A549 (cell line): ENCODE measurements at regions of chr17 and their contacts with region 1.

Region 1: GRCh38 chr17:17568749-17569195 is 22.7 kb downstream of the PEMT start:
- DNase-seq: peak; percentile 64 to 95
- ATAC-seq: peak; percentile 58 to 86; a peak in 5 of 6 replicates
- H3K4me3 ChIP-seq: no peak overlapping the region
- H3K27ac ChIP-seq: no peak overlapping the region
- H3K4me1 ChIP-seq: no peaks in the 10 kb centered on the region
- CTCF ChIP-seq: peak; percentile 84
- EP300 ChIP-seq: no peak
- POLR2A ChIP-seq: no peak
- RAD21 ChIP-seq: peak; percentile 80 to 81

Region 2: GRCh38 chr17:17445925-17446665 is 122.7 kb before region 1 on chr17:
- CTCF ChIA-PET with region 1: interaction called, 26 read pairs
- POLR2A ChIA-PET with region 1: no interaction called
- DNase-seq: peak; percentile 98
- ATAC-seq: peak; percentile 86 to 88
- H3K4me3 ChIP-seq: peak overlapping the region; percentile 14; the same call in 1 of the 3 replicates
- H3K27ac ChIP-seq: peak overlapping the region; percentile 71 to 83
- H3K4me1 ChIP-seq: peaks cover 48% of the 10 kb centered on the region
- CTCF ChIP-seq: no peak
- EP300 ChIP-seq: peak; percentile 90 to 97; a peak in 4 of 5 replicates
- POLR2A ChIP-seq: no peak
- RAD21 ChIP-seq: peak; percentile 5 to 49; a peak in 3 of 5 replicates

Region 3: GRCh38 chr17:17511881-17512858 is 56.6 kb before region 1 on chr17:
- CTCF ChIA-PET with region 1: interaction called, 50 read pairs
- POLR2A ChIA-PET with region 1: no interaction called
- DNase-seq: peak; percentile 39 to 54
- ATAC-seq: peak; percentile 31 to 62; a peak in 3 of 6 replicates
- H3K4me3 ChIP-seq: no peak overlapping the region
- H3K27ac ChIP-seq: peak overlapping the region in 1 of 2 experiments; percentile 45; a peak in 3 of 6 replicates
- H3K4me1 ChIP-seq: peaks cover 15% of the 10 kb centered on the region
- CTCF ChIP-seq: no peak
- EP300 ChIP-seq: no peak
- POLR2A ChIP-seq: no peak
- RAD21 ChIP-seq: no peak

Region 4: DNA sequence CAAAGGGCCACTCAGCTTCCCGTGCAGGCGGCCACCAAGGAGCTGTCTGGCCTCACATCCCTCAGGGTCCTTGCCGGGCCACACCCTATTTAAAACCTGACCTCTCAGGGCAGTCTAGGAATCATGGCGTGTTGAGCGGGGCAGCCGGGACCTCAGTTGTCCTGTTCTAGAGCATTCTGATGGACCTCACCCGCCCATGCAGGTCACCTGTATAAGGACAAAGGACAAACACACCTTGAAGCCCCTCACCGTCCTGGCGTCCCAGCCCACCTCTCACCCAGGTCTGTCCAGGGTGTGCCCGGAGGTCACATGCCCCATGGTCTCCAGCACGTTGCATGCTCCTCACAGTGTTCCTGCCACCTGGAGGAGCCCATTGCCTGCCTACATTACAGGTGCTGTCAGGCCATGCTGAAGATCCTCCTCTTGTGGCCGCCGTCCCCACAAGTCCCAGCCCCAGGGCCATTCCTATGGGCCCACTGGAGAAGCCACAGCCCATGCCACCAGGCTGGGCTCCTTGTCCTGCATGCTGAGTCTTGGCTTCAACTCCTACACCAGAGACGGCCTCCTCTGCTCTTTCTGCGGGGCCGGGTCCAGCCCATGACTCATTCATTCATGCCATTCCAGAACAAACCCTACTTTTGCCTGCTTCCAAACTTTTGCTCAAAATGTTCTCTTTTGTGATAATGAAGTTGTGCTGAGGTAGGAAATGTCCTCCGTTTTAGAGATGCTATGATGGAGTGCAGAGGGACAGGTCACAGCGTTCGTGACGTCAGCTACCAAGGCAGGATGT is 23.5 kb before region 1 on chr17:
- CTCF ChIA-PET with region 1: interaction called, 81 read pairs
- POLR2A ChIA-PET with region 1: no interaction called
- DNase-seq: no peak
- ATAC-seq: no peak
- H3K4me3 ChIP-seq: no peak overlapping the region
- H3K27ac ChIP-seq: no peak overlapping the region; a peak in 1 of 6 replicates
- H3K4me1 ChIP-seq: no peaks in the 10 kb centered on the region; the same call in 2 of the 3 replicates
- CTCF ChIP-seq: no peak
- EP300 ChIP-seq: no peak
- POLR2A ChIP-seq: no peak
- RAD21 ChIP-seq: no peak

Region 5: DNA sequence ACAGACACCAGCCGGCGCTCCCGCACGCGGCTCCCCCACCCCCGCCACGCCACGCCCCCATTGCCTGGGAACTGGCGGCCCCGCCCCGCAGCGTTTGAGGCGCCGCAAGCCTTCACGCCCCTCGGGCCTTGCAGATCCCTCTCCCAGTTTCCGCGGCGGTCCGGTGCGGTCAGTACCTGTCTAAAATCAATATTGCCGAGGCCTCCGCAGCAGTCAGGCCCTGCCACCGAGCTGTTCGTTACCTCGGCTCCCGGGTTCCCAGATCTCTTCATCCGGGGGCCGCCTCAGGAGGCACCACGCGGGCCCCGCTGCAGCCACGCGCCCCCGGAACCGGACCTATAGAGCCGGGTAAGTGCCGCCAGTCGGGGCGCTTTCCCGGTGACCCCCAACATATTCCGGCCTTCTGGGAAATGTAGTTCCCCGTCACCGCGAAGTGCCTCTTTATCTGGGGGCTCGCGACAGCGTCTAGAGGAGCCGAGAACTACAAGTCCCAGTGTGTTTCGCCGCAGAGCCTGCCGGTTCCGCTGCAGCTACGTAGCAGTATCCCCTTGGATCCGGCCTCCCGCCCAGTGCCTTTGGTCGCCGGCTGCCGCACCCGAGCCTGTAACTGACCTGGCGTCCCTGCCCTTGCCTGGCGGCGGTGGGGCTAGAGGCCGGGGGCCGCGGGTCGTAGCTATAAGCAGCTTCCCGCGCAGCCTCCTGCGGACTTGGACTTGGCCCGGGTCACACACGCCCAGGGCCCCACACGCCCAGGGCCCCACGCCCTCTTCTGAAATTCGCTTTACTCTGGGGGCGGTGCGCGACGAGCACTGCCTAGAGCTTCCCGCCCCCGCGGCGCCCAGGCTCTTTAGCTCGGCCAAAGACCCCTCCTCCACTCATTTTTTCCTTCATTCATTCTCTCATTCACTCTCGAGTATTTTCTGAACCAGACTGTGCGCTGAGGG is 22.9 kb after region 1 on chr17 and contains the start of gene PEMT:
- CTCF ChIA-PET with region 1: interaction called, 57 read pairs
- POLR2A ChIA-PET with region 1: interaction called, 3 read pairs
- DNase-seq: peak; percentile 96 to 100
- ATAC-seq: peak; percentile 94 to 98
- H3K4me3 ChIP-seq: peak within 1 kb of the TSS; percentile 86
- H3K27ac ChIP-seq: peak within 1 kb of the TSS; percentile 89 to 94
- H3K4me1 ChIP-seq: peaks cover 16% of the 10 kb centered on the region
- CTCF ChIP-seq: no peak
- EP300 ChIP-seq: no peak
- POLR2A ChIP-seq: peak; percentile 78
- RAD21 ChIP-seq: no peak
- polyA plus RNA-seq, gene PEMT: 47.8 and 62.4 TPM in 2 replicates